PC-9 (cell line): ENCODE measurements at regions of chr1 and their contacts with region 1.

Region 1: GRCh38 chr1:100866041-100866900 is 28.4 kb downstream of the EXTL2 start:
- DNase-seq: peak in 1 of 2 experiments; percentile 59
- H3K4me3 ChIP-seq: no peak overlapping the region
- H3K27ac ChIP-seq: no peak overlapping the region
- H3K4me1 ChIP-seq: 0 out of 2 replicates have a peak, but pooled peaks cover 4% of the 10 kb centered on the region
- H3K27me3 ChIP-seq: no peaks in the 10 kb centered on the region
- CTCF ChIP-seq: peak; percentile 91

Region 2: DNA sequence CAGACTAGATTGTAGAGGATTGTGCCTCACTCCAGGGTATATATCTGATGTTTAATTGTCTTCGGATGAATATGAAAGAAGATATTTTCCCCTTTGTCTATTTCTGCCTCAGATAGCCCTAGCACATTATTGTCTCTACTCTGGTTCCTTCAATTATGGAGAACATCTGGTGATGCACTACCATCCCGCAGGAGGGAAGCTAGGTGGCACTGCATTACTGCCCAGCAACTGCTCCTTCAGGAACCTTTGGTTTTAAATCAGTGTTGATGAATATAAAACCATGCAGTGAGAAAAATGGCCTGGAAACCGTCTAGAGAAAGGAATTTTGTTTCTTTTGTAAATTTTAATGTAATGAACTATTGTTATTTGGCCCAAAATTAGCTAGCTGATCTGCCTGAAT is 259.8 kb before region 1 on chr1:
- CTCF ChIA-PET with region 1: interaction called, 3 read pairs
- POLR2A ChIA-PET with region 1: no interaction called
- intact Hi-C with region 1: loop called (anchors 1 kb)
- DNase-seq: peak; percentile 22 to 70
- H3K4me3 ChIP-seq: no peak overlapping the region
- H3K27ac ChIP-seq: no peak overlapping the region
- H3K4me1 ChIP-seq: no peaks in the 10 kb centered on the region
- H3K27me3 ChIP-seq: no peaks in the 10 kb centered on the region
- CTCF ChIP-seq: peak; percentile 90